Posterior vena cava (tissue), 2 donors: ENCODE measurements at regions of chr1 and their contacts with region 1.

Region 1: DNA sequence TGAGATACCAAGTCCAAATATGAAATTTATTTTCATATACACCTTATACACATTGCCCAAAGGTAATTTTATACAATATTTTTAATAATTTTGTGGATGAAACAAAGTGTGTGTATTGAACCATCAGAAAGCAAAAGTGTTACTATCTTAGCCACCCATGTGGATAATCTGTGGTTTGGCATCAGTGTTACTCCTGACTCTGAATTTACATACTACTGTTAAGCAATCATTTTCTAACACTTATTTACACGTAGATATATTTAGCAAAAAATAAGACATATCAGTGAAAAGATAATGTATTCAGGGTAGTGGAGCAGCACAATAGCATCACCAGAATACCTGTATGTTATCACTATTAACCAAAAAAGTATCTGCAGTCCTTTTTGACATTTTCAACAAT is 23.8 kb downstream of the DENND2D start:
- DNase-seq: no peak

Region 2: DNA sequence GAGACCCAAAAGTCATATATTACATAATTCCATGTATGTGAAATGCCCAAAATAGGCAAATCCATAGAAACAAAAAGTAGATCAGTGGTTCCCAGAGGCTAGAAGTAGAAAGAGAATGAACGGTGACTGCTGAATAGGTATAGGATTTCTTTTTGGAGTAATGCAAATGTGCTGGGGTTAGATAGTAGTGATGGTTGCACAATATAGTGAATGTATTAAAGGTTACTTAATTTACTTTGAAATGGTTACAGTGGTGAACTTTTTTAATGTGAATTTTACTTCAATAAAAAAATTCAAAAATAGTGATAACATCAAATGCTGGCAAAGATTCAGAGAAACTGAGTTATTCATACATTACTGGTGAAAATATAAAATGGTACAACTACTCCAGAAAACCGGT is 336.0 kb before region 1 on chr1:
- intact Hi-C with region 1: loop called in 1 of 2 experiments (anchors 5 kb)
- DNase-seq: no peak

Region 3: GRCh38 chr1:110888049-110888448 is 288.6 kb before region 1 on chr1:
- intact Hi-C with region 1: loop called in 1 of 2 experiments (anchors 5 kb)
- DNase-seq: no peak

Region 4: DNA sequence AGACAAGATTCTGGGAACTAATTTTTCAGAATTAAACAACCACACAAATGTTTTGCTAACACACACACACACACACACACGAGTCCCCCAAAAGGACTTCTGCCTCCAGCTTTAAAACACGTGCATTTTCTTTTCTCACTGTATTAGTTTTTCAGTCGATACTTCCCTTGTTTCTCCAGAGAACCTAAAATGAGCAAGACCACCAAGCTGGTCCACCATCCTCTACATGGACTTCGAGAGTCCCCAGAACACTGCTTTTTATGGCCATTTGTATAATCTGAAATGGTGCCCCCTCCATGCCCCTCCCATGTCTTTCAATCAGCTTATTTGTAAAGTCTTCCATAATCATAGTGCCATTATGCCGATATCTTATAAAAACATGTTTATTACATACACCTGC is 40.1 kb after region 1 on chr1:
- intact Hi-C with region 1: loop called in 1 of 2 experiments (anchors 1 kb)
- DNase-seq: no peak